HepG2 (cell line): ENCODE measurements at regions of chr4 and their contacts with region 1.

Region 1: DNA sequence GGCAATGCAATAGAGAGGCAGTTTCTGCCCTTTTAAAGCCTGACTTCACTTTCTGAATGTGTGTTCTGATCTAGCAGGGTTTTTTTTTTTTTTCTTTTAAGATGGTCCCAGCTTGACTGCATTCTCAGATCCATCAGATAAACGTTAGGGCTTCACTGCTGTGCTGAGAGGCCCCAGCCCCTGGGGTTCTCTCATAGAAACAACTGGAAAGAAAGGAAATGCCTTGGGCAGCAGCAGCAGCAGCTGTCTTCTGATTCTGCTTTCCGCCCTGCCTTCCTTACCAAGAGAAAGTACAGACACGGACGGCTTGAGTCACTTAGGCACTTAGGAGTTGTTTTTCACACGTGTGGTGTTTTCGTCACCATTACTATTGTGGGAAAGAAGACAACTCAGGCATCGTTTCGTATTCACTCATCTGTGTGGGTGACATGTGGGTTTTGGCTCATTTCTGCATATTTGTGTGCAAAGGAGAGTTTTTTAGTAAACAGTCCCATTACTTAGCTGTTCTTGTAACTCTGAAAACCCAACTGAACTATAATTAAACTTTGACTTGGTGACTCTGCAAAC is 172.0 kb downstream of the PTTG2 start:
- DNase-seq: no peak
- ATAC-seq: no peak
- H3K4me3 ChIP-seq: no peak overlapping the region; a peak in 1 of 6 replicates
- H3K27ac ChIP-seq: peak overlapping the region; percentile 92
- H3K4me1 ChIP-seq: peaks cover 90% of the 10 kb centered on the region
- H3K27me3 ChIP-seq: no peaks in the 10 kb centered on the region
- CTCF ChIP-seq: no peak
- EP300 ChIP-seq: 0 out of 4 replicates have a peak, but pooled peaks of 1 of the 2 experiments have one; percentile 7
- POLR2A ChIP-seq: no peak
- RAD21 ChIP-seq: no peak

Region 2: DNA sequence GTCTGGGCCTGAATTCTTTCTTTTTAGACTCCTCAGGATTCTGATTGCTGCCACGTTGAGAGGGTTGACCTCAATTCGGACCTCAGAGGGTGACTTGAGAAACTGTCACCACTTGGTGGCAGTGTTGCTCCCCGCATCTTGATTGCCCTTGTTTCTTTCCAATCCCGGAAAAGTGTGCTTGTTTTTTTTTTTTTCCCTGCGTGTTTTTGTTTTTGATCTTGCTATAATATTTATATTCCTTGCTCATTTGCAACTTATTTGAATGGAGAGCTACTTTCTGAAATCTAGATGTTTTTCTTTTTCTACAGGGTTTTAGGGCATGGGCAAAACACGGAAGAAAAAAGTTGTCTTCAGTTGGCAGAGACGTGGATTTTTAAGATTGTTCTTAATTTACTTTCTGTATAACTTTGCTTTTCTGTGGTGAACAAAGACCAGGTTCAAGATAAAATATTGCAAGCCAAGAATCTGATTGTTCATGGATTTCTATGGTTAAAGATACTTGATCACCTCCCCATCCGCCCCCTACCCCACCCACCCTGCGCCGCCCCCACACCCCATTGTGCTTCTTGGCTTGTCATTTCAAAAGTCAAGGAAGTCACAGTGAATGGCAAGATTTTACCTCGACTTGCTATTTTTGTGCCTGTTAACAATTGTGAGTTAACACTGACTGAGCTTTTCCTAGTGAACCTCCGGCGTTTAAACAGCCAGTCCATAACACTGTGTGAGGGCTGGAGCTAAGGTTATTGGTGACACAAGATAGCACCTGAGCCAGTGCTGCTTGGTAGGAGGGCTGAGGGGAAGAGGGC is 69.9 kb before region 1 on chr4:
- CTCF ChIA-PET with region 1: no interaction called
- POLR2A ChIA-PET with region 1: interaction called, 4 read pairs
- in situ Hi-C with region 1: no loop called
- intact Hi-C with region 1: loop called (anchors 1 kb)
- DNase-seq: peak; percentile 73
- ATAC-seq: peak; percentile 78
- H3K4me3 ChIP-seq: no peak overlapping the region
- H3K27ac ChIP-seq: peak overlapping the region; percentile 49
- H3K4me1 ChIP-seq: peaks cover 33% of the 10 kb centered on the region
- H3K27me3 ChIP-seq: no peaks in the 10 kb centered on the region
- CTCF ChIP-seq: peak; percentile 87
- EP300 ChIP-seq: peak in 1 of 2 experiments; percentile 26; a peak in 1 of 4 replicates
- POLR2A ChIP-seq: no peak
- RAD21 ChIP-seq: peak; percentile 78

Region 3: DNA sequence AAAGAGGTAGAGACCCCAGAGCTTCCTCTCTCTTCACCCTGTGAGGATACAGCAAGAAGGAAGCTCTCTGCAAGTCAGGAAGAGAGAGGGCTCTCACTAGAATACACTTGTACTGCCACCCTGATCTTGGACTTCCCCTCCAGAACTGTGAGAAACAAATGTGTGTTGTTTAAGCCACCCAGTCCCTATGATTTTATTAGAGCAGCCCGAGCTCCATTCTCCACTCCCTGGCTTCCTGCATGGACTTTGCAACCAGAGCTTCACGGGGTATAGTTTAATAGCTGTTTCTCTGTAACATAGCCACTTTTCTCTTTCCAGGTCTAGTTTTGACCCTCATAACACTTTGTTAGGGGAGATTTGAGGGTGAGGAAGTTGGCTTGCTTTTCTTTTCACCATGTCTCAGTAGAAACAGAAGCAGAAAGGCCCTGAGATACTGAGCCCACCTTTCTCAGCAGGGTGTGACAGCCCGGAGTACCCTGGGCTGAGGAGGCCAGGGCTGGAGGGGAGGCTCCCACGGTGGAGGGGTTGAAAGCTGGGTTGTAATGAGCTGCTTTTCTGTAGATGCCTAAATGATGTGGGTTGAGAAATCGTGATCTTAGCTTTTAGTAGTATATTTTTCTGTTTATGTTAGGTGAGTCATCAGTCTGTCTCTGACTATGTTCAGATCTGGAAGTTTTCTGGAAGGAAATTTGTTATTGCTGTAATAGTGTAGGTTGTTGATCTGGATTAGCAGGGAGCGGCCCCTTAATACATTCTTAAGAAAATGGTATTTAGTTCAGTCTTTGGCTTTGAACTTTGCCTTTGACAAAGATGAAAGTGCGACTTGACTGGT is 53.4 kb before region 1 on chr4:
- CTCF ChIA-PET with region 1: no interaction called
- POLR2A ChIA-PET with region 1: interaction called, 84 read pairs
- in situ Hi-C with region 1: loop called (anchors 5 kb)
- intact Hi-C with region 1: loop called (anchors 1 kb)
- DNase-seq: peak; percentile 65
- ATAC-seq: peak; percentile 80
- H3K4me3 ChIP-seq: peak overlapping the region in 1 of 3 experiments; percentile 31; a peak in 1 of 6 replicates
- H3K27ac ChIP-seq: peak overlapping the region; percentile 97
- H3K4me1 ChIP-seq: peaks cover 93% of the 10 kb centered on the region
- H3K27me3 ChIP-seq: no peaks in the 10 kb centered on the region
- CTCF ChIP-seq: no peak
- EP300 ChIP-seq: no peak
- POLR2A ChIP-seq: peak in 1 of 2 experiments; percentile 55; a peak in 1 of 4 replicates
- RAD21 ChIP-seq: no peak

Region 4: DNA sequence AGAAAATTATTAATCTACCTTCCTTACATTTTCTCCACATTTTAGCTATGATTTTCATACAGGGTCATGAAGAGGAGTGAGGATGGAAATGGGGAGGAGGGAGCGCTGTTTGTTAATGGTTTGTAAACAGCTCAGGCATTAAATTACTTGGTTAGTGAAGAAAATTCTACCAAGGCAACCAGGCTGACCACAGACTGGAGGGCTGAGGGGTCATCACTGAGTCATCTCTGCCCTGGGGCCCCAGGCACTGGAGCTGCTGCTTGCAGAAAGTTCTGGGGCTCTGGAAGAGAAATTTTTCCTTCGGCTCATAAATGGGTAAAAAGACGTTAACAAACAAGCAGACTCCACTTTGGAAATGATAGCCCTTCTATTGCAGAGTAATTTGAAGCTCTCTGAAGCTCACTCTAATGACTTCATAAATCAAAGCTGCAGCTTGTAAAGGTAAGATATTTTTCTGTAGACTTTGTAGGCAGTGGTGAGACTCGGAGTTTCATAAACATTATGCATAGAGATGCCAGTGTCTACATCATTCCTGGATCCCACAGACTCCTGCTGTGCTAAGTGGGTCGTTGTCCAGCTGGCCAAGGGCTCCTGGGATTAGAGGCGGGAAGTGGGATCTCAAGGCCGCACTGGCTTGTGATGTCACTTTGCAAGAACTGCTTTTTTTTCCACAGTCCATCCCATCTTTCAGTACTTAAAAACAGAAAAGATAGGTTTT is 12.4 kb before region 1 on chr4:
- CTCF ChIA-PET with region 1: no interaction called
- POLR2A ChIA-PET with region 1: interaction called, 22 read pairs
- in situ Hi-C with region 1: no loop called
- intact Hi-C with region 1: no loop called
- DNase-seq: no peak
- ATAC-seq: no peak
- H3K4me3 ChIP-seq: no peak overlapping the region
- H3K27ac ChIP-seq: no peak overlapping the region
- H3K4me1 ChIP-seq: peaks cover 48% of the 10 kb centered on the region
- H3K27me3 ChIP-seq: no peaks in the 10 kb centered on the region
- CTCF ChIP-seq: no peak
- EP300 ChIP-seq: no peak; a peak in 1 of 4 replicates
- POLR2A ChIP-seq: no peak
- RAD21 ChIP-seq: no peak

Region 5: DNA sequence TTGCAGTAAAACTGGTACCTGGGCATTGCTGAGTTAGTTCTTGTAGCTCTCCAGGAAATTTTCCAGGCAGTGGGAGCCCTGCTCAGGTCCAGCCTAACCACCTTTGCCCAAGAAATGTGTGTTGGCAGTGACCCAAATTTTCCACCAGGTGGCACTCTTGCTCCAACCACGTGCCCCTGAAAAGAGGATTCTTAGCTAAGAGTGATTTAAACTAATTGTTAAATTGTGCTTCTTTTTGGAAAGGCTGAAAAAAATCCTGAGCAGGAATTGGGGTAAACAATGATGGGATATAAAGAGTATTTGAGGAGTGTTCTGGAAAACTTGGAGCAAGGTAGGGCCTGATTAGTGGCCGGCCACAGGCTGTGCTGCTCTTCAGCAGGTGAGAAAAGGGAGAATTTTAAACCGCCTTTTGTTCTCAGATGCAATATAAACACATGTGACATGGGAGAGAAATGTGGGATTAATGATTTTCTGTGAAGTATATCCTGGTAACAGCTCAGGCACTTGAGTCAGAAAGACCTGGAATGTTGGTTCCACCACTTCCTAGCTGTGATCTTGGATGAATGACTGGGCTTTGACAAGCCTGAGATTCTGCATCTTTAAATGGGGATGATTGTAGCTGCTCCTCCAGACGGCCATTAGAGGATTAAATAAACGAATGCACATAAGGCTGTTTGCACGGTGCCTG is 47.6 kb after region 1 on chr4:
- CTCF ChIA-PET with region 1: no interaction called
- POLR2A ChIA-PET with region 1: interaction called, 14 read pairs
- in situ Hi-C with region 1: no loop called
- intact Hi-C with region 1: loop called (anchors 5 kb)
- DNase-seq: peak; percentile 65
- ATAC-seq: peak; percentile 88
- H3K4me3 ChIP-seq: no peak overlapping the region
- H3K27ac ChIP-seq: no peak overlapping the region
- H3K4me1 ChIP-seq: peaks cover 51% of the 10 kb centered on the region
- H3K27me3 ChIP-seq: no peaks in the 10 kb centered on the region
- CTCF ChIP-seq: peak; percentile 91
- EP300 ChIP-seq: peak in 1 of 2 experiments; percentile 45; a peak in 1 of 4 replicates
- POLR2A ChIP-seq: no peak
- RAD21 ChIP-seq: peak; percentile 95

Region 6: DNA sequence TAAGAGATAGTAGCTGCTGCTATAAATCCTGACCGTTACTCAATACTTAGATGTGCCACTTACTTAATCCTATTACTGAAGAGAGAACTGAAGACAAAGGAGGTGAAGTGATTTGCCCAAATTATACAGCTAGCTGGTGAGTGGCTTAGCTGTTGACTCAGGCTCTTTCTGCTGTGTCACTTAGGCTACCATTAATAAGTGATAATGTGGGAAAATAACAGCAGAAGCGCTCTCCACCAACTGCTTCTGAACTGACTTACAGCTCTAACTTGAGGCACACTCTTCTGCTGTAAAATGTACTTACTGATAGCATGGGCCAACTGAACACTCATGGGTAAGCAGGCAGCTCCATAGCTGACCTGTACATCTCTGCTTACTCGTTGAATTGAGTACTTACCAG is 922.3 kb after region 1 on chr4:
- CTCF ChIA-PET with region 1: no interaction called
- POLR2A ChIA-PET with region 1: no interaction called
- in situ Hi-C with region 1: no loop called
- intact Hi-C with region 1: no loop called
- DNase-seq: no peak
- ATAC-seq: no peak
- H3K4me3 ChIP-seq: no peak overlapping the region
- H3K27ac ChIP-seq: no peak overlapping the region
- H3K4me1 ChIP-seq: peaks cover 6% of the 10 kb centered on the region; the same call in 1 of the 2 replicates
- H3K27me3 ChIP-seq: no peaks in the 10 kb centered on the region
- CTCF ChIP-seq: no peak
- EP300 ChIP-seq: no peak
- POLR2A ChIP-seq: no peak
- RAD21 ChIP-seq: no peak